ENCODE measurements at regions of chr1 and their contacts with region 1.

Region 1: GRCh38 chr1:234610348-234611152 is 572 bp upstream of the IRF2BP2 start:
- DNase-seq: peak; percentile 95
- ATAC-seq: peak; percentile 50
- H3K4me3 ChIP-seq: peak overlapping the region; percentile 54 to 95 (median 70)
- H3K4me3 Mint-ChIP-seq: peak overlapping the region; percentile 98
- H3K27ac ChIP-seq: peak overlapping the region; percentile 78 to 94
- H3K27ac Mint-ChIP-seq: peak overlapping the region; percentile 99
- H3K4me1 ChIP-seq: peaks cover 46 to 49% of the 10 kb centered on the region in 2 donors
- H3K4me1 Mint-ChIP-seq: peaks cover 56% of the 10 kb centered on the region
- H3K27me3 ChIP-seq: no peaks in the 10 kb centered on the region
- H3K27me3 Mint-ChIP-seq: no peaks in the 10 kb centered on the region
- CTCF ChIP-seq: no peak

Region 2: DNA sequence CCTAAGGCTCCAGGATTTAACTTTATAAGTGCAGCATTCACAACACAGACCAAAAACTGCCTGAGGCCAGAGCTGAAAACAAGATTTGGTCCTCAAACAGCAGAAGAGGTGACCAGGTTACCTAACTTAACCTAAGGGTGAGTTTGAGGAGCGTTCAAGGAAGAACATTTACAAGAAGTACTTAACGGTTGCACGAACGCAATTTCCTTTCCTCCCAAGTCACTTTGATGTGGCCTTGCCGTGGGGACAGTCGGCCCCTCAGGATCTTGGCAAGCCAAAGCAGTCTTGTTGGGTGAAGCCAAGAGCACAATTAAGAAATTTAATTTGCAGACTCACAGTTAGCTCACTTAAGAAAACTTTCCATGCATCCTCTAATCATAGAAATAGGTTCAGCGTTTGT is 439.9 kb before region 1 on chr1:
- CTCF ChIA-PET with region 1: no interaction called
- POLR2A ChIA-PET with region 1: no interaction called
- intact Hi-C with region 1: no loop called
- DNase-seq: no peak
- ATAC-seq: no peak
- H3K4me3 ChIP-seq: no peak overlapping the region
- H3K4me3 Mint-ChIP-seq: no peak overlapping the region
- H3K27ac ChIP-seq: no peak overlapping the region
- H3K27ac Mint-ChIP-seq: no peak overlapping the region
- H3K4me1 ChIP-seq: no peaks in the 10 kb centered on the region
- H3K4me1 Mint-ChIP-seq: no peaks in the 10 kb centered on the region
- H3K27me3 ChIP-seq: peaks cover 0 to 6% (median 0%) of the 10 kb centered on the region in 4 experiments
- H3K27me3 Mint-ChIP-seq: peaks cover 12% of the 10 kb centered on the region
- CTCF ChIP-seq: no peak

Region 3: DNA sequence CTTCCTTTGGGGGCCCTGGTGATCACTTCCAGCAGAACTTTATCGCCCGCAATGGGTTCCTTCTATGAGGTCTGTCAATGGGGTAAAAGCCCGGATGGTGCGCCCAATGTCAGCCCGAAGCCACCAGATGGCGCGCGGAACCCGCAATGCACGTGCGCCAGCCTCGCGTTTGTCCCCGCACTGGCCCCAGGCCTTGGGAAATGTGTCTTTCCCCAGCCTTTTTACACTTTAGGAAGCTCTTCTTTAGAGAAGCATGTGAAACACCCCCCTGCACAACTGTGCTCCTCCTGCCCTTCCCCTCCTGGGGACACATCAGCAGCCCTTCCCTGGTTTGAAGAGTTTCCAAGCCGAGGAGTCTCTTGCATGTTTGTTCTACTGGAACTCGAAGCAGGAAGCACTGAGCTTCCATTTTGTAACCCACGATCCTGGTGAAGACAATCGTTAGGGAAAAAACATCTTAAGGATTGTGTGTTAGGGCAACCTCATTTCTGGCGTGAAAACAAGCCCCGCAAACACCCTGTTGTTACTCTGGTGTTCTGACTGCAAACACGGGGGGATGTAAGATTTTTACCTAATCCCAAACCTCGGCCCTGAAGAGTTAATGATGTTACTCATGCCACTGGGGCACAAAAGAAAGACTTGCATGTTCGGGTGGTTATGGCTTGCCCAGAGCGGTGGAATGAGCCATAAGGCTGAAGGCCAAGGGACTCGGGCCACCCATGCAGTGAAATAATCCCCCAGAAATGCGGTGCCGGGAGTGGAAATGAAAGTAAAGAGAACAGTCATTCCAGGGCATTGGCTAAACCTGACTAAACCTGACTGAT is 111.2 kb before region 1 on chr1:
- CTCF ChIA-PET with region 1: interaction called, 16 read pairs
- POLR2A ChIA-PET with region 1: interaction called, 3 read pairs
- intact Hi-C with region 1: loop called (anchors 1 kb)
- DNase-seq: peak; percentile 86
- ATAC-seq: peak; percentile 97
- H3K4me3 ChIP-seq: peak overlapping the region in 2 of 5 experiments; percentile 2 to 27
- H3K4me3 Mint-ChIP-seq: peak overlapping the region; percentile 67
- H3K27ac ChIP-seq: no peak overlapping the region
- H3K27ac Mint-ChIP-seq: peak overlapping the region; percentile 70
- H3K4me1 ChIP-seq: peaks cover 3 to 15% of the 10 kb centered on the region in 2 donors
- H3K4me1 Mint-ChIP-seq: peaks cover 25% of the 10 kb centered on the region
- H3K27me3 ChIP-seq: no peaks in the 10 kb centered on the region
- H3K27me3 Mint-ChIP-seq: no peaks in the 10 kb centered on the region
- CTCF ChIP-seq: peak; percentile 92

Region 4: GRCh38 chr1:234722904-234723720 is 112.6 kb after region 1 on chr1:
- CTCF ChIA-PET with region 1: interaction called, 17 read pairs
- POLR2A ChIA-PET with region 1: interaction called, 4 read pairs
- intact Hi-C with region 1: loop called (anchors 1 kb)
- DNase-seq: peak; percentile 62
- ATAC-seq: no peak
- H3K4me3 ChIP-seq: no peak overlapping the region
- H3K4me3 Mint-ChIP-seq: peak overlapping the region; percentile 70
- H3K27ac ChIP-seq: peak overlapping the region in 1 of 2 donors; percentile 17
- H3K27ac Mint-ChIP-seq: peak overlapping the region; percentile 70
- H3K4me1 ChIP-seq: peaks cover 35 to 50% of the 10 kb centered on the region in 2 donors
- H3K4me1 Mint-ChIP-seq: peaks cover 47% of the 10 kb centered on the region
- H3K27me3 ChIP-seq: no peaks in the 10 kb centered on the region
- H3K27me3 Mint-ChIP-seq: no peaks in the 10 kb centered on the region
- CTCF ChIP-seq: no peak

Region 5: DNA sequence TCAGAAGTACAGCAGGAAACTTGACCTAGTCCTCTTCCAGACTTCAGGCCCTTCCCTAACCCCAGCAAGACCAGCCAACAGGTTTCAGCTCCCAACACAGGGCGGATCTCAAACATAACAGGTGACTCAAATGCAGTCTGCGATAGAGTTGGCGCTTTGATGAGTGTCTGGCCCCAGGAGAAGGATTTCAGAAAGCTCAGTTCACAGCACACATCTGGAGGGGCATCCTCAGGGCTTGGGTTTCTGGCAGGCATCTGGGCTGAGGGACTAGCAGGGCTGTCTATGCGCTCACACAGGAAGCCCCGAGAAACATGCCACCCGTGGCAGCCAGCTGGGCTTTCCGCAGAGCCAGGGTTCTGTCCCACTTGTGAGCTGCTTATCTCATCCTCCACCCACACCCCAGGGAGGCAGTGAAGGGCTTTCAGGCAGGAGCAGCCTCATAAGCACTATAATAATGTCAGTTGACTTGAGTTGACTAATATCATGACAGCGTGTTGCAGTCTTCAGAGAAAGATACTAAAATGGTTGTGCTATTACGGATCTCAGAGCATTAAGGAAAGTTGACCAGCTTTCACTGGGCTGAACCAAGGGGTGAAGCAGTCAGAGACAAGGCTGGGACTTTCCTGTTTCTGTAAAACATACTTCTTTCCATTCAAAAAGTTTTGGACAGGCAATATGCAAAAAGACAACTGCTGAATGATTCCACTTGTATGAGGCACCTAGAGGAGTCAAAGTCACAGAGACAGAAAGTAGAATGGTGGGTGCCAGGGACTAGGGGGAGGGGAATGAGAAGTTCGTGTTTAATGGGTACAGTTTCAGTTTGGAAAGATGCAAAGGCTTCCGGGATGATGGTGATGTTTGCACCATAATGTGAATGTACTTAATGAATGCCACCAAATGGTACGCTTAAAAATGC is 232.4 kb after region 1 on chr1:
- CTCF ChIA-PET with region 1: no interaction called
- POLR2A ChIA-PET with region 1: no interaction called
- intact Hi-C with region 1: loop called (anchors 5 kb)
- DNase-seq: peak; percentile 49
- ATAC-seq: peak; percentile 65
- H3K4me3 ChIP-seq: no peak overlapping the region
- H3K4me3 Mint-ChIP-seq: peak overlapping the region; percentile 50
- H3K27ac ChIP-seq: no peak overlapping the region
- H3K27ac Mint-ChIP-seq: peak overlapping the region; percentile 11
- H3K4me1 ChIP-seq: peaks cover 25 to 33% of the 10 kb centered on the region in 2 donors
- H3K4me1 Mint-ChIP-seq: peaks cover 40% of the 10 kb centered on the region
- H3K27me3 ChIP-seq: no peaks in the 10 kb centered on the region
- H3K27me3 Mint-ChIP-seq: no peaks in the 10 kb centered on the region
- CTCF ChIP-seq: no peak

Region 6: DNA sequence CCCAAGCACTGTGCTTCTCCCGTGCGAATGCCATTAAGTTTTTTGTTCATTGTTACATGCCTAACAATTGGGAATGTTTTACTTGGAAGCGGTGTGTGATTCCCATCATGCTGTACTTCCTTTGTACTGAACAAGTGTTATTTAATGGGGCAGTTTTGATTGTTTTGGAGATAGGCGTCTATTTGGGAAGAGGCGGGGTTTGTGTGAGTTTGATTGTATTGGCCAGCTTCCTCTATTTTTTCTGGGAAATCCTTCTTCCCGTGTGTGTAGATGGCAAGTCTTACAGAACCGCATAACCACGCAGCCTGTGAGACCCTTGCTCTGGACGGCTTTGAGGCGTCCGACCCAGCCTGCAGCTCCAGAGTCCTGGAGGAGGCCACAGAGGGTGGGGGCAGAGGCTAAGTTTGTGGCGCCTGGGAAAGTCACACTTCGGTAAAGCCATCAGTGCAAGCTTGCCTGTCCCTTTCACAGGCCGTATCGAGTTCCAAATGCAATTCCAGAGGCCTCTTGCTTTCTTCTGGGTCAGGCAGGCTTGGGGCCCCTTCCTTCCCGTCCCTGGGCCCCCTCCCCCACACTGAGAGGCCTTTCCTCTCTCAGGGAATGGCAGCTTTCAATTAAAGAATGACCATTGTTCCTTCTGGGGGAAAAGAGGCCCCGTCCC is 307.8 kb after region 1 on chr1:
- CTCF ChIA-PET with region 1: no interaction called
- POLR2A ChIA-PET with region 1: no interaction called
- intact Hi-C with region 1: no loop called
- DNase-seq: no peak
- ATAC-seq: no peak
- H3K4me3 ChIP-seq: no peak overlapping the region
- H3K4me3 Mint-ChIP-seq: no peak overlapping the region
- H3K27ac ChIP-seq: no peak overlapping the region
- H3K27ac Mint-ChIP-seq: no peak overlapping the region
- H3K4me1 ChIP-seq: no peaks in the 10 kb centered on the region
- H3K4me1 Mint-ChIP-seq: peaks cover 8% of the 10 kb centered on the region
- H3K27me3 ChIP-seq: no peaks in the 10 kb centered on the region
- H3K27me3 Mint-ChIP-seq: no peaks in the 10 kb centered on the region
- CTCF ChIP-seq: no peak

Region 7: GRCh38 chr1:235011599-235012435 is 401.3 kb after region 1 on chr1:
- CTCF ChIA-PET with region 1: interaction called, 6 read pairs
- POLR2A ChIA-PET with region 1: interaction called, 18 read pairs
- intact Hi-C with region 1: loop called (anchors 1 kb)
- DNase-seq: peak; percentile 97
- ATAC-seq: peak; percentile 87
- H3K4me3 ChIP-seq: peak overlapping the region; percentile 23 to 52 (median 32)
- H3K4me3 Mint-ChIP-seq: peak overlapping the region; percentile 76
- H3K27ac ChIP-seq: peak overlapping the region; percentile 89 to 96
- H3K27ac Mint-ChIP-seq: peak overlapping the region; percentile 96
- H3K4me1 ChIP-seq: peaks cover 50 to 65% of the 10 kb centered on the region in 2 donors
- H3K4me1 Mint-ChIP-seq: peaks cover 82% of the 10 kb centered on the region
- H3K27me3 ChIP-seq: no peaks in the 10 kb centered on the region
- H3K27me3 Mint-ChIP-seq: no peaks in the 10 kb centered on the region
- CTCF ChIP-seq: no peak

Region 8: DNA sequence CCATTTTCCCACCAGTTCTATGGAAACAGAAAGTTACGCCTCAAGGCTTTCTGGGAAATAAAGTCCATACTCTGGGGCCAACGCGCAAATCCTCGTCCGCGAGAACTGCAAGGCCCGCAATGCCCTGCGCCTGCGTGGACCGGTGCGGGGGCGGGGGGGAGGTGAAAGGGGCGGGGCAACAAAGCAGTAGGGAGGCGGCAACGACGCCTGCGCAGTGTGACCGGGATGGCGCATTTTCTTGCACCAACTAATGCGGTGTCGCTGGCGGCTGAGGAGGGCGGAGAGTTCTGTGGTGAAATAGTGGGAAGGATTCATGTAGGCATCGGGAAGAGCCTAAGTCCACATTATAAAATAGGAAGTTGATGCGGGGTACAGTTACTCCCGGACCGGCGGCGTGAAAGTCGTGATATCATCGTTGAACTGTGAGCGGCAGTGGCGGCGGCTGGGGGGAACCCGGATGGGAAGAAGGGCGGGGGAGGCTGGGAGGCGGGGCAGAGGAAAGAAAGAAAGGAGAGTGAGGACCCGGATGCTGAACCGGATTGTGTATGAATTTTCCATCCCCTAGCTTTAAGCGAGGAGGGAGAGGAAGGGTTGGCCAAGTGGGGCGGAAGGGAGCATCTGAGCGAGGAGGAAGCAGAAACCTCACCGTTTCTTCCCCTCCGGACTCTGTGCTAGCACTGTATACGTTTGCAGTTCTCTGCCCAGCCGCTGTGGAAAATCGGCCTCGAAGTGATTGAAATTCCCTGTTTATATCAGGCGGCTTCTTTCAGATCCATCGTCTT is 718.0 kb after region 1 on chr1 and contains the start of gene GGPS1:
- CTCF ChIA-PET with region 1: no interaction called
- POLR2A ChIA-PET with region 1: no interaction called
- intact Hi-C with region 1: loop called (anchors 5 kb)
- DNase-seq: peak; percentile 98
- ATAC-seq: peak; percentile 75
- H3K4me3 ChIP-seq: peak within 1 kb of the TSS; percentile 89 to 99 (median 99)
- H3K4me3 Mint-ChIP-seq: no peak within 1 kb of the TSS
- H3K27ac ChIP-seq: peak within 1 kb of the TSS; percentile 89 to 98
- H3K27ac Mint-ChIP-seq: no peak within 1 kb of the TSS
- H3K4me1 ChIP-seq: peaks cover 33 to 58% of the 10 kb centered on the region in 2 donors
- H3K4me1 Mint-ChIP-seq: peaks cover 53% of the 10 kb centered on the region
- H3K27me3 ChIP-seq: no peaks in the 10 kb centered on the region
- H3K27me3 Mint-ChIP-seq: no peaks in the 10 kb centered on the region
- CTCF ChIP-seq: peak; percentile 36
- total RNA-seq, gene GGPS1: 43.6 and 46.8 TPM in 2 replicates

Measured in B cell (primary cell).